ENCODE measurements at regions of chr16 and their contacts with region 1.

Region 1: GRCh38 chr16:80526425-80527061 is 14.2 kb upstream of the DYNLRB2 start:
- DNase-seq: peak; percentile 69
- ATAC-seq: peak; percentile 69
- H3K4me3 Mint-ChIP-seq: no peak overlapping the region
- H3K27ac Mint-ChIP-seq: no peak overlapping the region
- H3K4me1 Mint-ChIP-seq: peaks cover 15% of the 10 kb centered on the region
- H3K27me3 Mint-ChIP-seq: peaks cover 10% of the 10 kb centered on the region

Region 2: DNA sequence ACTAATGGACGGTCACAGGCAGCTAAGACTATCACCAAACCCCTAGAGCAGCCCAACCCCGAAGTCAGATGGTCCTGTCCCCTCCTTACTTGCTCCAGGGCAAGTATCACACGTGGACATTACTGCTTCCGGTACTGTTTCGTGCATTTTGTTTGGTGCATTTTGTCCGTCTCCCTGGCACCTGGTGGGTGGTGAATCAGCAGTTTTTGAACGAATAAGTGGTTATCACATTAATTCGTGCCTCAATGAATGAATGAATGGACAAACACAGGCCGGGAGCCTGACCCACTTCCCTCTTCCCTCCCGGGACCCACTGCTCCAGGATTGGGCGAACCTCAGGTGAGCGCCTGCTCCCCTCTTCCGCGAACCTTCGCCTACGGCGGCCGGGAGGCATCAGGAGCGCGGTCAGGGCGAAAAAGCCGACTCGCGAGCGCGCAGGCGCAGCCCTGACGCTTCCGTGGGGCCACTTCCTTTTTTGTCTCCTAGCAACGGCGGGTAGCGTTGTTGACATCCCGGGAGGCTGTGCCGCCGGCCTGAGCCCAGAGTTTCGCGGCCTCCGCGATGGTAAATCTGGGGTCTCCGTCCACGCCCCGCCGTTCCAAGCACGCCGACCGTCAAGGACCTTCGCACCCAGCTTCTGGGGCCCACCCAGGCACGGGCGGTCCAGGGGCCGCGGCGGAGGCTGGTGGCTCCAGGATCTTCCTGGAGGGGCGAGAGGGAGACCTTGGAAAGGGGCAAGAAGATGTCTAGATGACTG is 14.2 kb after region 1 on chr16 and contains the start of gene DYNLRB2:
- CTCF ChIA-PET with region 1: interaction called, 42 read pairs
- DNase-seq: peak; percentile 97
- ATAC-seq: peak; percentile 96
- H3K4me3 Mint-ChIP-seq: peak within 1 kb of the TSS; percentile 97
- H3K27ac Mint-ChIP-seq: peak within 1 kb of the TSS; percentile 98
- H3K4me1 Mint-ChIP-seq: peaks cover 34% of the 10 kb centered on the region
- H3K27me3 Mint-ChIP-seq: no peaks in the 10 kb centered on the region
- total RNA-seq, gene DYNLRB2: 0.76 TPM in 1 of 2 experiments, not detected in the other

Region 3: DNA sequence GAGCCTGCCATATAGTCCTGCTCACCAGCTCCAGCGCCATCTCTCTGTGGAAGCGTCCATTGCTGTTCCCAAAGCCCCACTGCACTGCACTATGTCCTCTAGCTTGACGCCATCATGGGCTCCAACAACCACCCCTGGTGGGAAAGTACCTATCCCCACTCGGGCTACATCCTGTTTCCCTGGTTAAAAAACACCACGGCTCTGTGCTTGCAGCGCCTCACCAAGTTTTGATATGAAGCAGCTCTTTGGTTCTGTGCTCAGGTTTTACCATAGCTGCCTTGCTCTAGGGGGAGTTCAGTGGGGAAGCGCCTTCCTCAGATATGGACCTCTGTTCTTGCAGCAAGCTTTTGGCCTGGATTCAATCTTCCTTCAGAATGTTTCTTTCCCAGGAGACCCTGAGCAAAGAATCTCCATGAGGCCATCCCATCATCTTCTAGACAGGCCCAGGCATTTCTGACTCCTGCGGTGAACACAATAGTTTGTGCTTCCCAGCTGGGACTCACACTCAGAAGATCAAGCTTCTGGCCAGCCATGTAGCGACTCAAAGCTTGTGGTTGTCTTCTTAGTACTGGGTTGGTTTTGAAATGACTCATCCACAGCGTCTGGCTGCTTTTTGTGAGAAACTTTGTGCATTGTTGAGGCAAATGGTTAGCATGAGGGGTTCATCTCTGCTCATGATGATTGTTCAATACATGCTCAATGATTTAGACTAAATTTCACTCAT is 53.7 kb after region 1 on chr16:
- CTCF ChIA-PET with region 1: interaction called, 52 read pairs
- DNase-seq: peak; percentile 95
- ATAC-seq: peak; percentile 88
- H3K4me3 Mint-ChIP-seq: peak overlapping the region; percentile 54
- H3K27ac Mint-ChIP-seq: peak overlapping the region; percentile 96
- H3K4me1 Mint-ChIP-seq: peaks cover 73% of the 10 kb centered on the region
- H3K27me3 Mint-ChIP-seq: no peaks in the 10 kb centered on the region

Region 4: DNA sequence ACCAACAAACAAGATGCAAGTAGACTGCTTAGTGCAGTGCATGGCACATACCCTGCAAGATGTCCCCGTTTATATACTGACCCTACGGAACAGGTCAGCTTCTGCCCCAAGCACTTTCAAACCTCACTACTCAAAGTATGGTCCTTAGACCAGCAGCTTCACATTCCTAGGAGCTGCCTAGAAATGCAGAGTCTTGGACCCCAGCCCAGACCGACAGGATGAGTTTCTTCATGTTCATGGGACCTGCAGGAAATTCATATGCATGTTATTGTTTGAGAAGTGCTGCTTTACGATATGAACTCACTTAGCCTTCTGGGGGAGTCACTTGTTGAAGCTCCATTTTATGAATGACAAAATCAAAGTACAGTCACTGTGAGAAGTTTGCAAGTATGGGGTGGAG is 96.8 kb after region 1 on chr16:
- CTCF ChIA-PET with region 1: interaction called, 11 read pairs
- DNase-seq: no peak
- ATAC-seq: no peak
- H3K4me3 Mint-ChIP-seq: no peak overlapping the region
- H3K27ac Mint-ChIP-seq: no peak overlapping the region
- H3K4me1 Mint-ChIP-seq: peaks cover 23% of the 10 kb centered on the region
- H3K27me3 Mint-ChIP-seq: no peaks in the 10 kb centered on the region

Region 5: DNA sequence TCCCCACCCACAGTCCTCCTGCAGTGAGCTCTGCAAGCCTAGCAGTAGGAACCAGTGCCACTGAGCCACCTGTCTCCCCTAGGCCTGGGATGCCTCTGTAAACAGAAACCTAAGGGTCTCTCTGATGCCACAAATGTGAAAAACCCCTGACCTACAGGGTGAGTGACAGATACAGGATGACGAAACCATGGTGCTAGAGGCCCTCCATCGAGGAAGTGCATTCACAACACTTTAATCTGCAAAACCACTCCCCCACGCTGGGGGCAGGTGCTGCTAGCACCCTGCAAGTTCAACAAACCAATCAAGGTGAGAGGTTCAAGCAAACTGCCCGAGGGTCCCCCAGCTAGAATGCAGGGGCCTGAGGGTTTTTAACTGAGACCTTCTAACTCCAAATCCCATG is 218.3 kb after region 1 on chr16:
- CTCF ChIA-PET with region 1: interaction called, 14 read pairs
- DNase-seq: peak; percentile 67
- ATAC-seq: peak; percentile 82
- H3K4me3 Mint-ChIP-seq: no peak overlapping the region
- H3K27ac Mint-ChIP-seq: peak overlapping the region; percentile 72
- H3K4me1 Mint-ChIP-seq: peaks cover 56% of the 10 kb centered on the region
- H3K27me3 Mint-ChIP-seq: no peaks in the 10 kb centered on the region

Region 6: GRCh38 chr16:80816365-80816764 is 289.8 kb after region 1 on chr16:
- CTCF ChIA-PET with region 1: interaction called, 18 read pairs
- DNase-seq: no peak
- ATAC-seq: no peak
- H3K4me3 Mint-ChIP-seq: no peak overlapping the region
- H3K27ac Mint-ChIP-seq: no peak overlapping the region
- H3K4me1 Mint-ChIP-seq: peaks cover 4% of the 10 kb centered on the region
- H3K27me3 Mint-ChIP-seq: peaks cover 4% of the 10 kb centered on the region